ENCODE measurements at regions of chr11 and their contacts with region 1.

Region 1: DNA sequence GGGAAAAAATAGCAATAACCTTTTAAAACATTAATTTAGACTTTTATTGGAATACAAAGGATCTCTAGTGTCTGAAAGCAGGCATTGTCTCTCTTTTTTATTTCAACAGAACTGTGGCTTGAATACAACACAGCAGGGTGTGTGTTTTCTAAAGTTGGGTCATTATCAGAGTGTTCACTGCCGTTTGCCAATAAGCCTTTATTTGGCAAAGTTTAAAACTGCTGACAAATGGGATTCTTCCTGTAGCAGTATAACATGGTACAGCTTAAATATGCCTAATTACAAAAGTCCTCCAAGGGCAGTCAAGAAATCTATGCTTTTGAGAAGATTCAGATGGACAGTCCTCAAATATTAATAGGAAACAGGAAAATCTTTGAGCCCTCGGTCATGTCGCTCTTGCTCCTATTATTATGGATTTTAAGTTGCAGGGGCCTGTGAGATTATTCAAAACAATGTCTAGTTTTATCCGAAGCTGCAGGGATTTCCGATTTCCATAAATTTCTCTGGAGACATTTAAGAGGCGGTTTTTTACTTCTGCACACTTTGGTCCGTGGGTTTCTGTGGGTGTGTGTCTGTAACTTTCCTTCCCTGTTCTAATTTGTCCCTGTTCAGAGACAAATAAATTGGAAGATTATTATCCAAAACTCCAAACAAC is 199.9 kb downstream of the MAML2 start:
- DNase-seq: no peak
- ATAC-seq: no peak
- H3K4me3 ChIP-seq: no peak overlapping the region
- H3K27ac ChIP-seq: no peak overlapping the region
- H3K4me1 ChIP-seq: peaks cover 9% of the 10 kb centered on the region
- H3K27me3 ChIP-seq: no peaks in the 10 kb centered on the region
- CTCF ChIP-seq: no peak
- POLR2A ChIP-seq: no peak
- RAD21 ChIP-seq: no peak

Region 2: GRCh38 chr11:95912902-95913560 is 230.1 kb before region 1 on chr11:
- CTCF ChIA-PET with region 1: no interaction called
- POLR2A ChIA-PET with region 1: no interaction called
- dilution Hi-C with region 1: no loop called
- in situ Hi-C with region 1: no loop called
- intact Hi-C with region 1: no loop called
- DNase-seq: peak; percentile 68
- ATAC-seq: peak; percentile 70
- H3K4me3 ChIP-seq: no peak overlapping the region
- H3K27ac ChIP-seq: no peak overlapping the region
- H3K4me1 ChIP-seq: peaks cover 9% of the 10 kb centered on the region; the same call in 1 of the 2 replicates
- H3K27me3 ChIP-seq: no peaks in the 10 kb centered on the region
- CTCF ChIP-seq: no peak
- POLR2A ChIP-seq: no peak
- RAD21 ChIP-seq: no peak

Region 3: GRCh38 chr11:96112201-96113128 is 30.7 kb before region 1 on chr11:
- CTCF ChIA-PET with region 1: no interaction called
- POLR2A ChIA-PET with region 1: no interaction called
- dilution Hi-C with region 1: no loop called
- in situ Hi-C with region 1: no loop called
- intact Hi-C with region 1: loop called (anchors 2 kb)
- DNase-seq: peak; percentile 54
- ATAC-seq: no peak
- H3K4me3 ChIP-seq: no peak overlapping the region
- H3K27ac ChIP-seq: peak overlapping the region; percentile 84
- H3K4me1 ChIP-seq: peaks cover 20% of the 10 kb centered on the region
- H3K27me3 ChIP-seq: no peaks in the 10 kb centered on the region
- CTCF ChIP-seq: no peak
- POLR2A ChIP-seq: no peak
- RAD21 ChIP-seq: no peak